Dorsolateral prefrontal cortex (tissue), 120 donors: ENCODE measurements at regions of chr9 and their contacts with region 1.

Region 1: DNA sequence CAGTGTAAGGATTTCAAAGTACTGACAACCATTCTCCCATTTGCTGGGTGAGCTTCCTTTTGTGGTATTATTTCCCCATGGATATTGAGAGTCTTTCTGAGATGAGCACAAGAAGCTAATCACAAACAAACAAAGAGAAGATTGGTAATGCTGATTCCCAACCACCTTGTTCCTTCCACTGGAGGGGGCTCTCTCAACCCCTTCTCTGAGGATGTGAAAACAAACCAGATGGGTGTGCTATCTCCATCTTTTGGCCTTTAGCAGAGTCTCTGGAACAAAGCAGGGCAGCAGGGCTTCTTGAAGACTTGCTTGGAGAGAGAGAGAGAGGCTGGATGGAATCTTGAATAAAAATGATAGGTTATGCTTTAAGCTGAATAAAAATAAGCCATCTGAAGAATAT is 576.7 kb upstream of the ZNF462 start:
- DNase-seq: peak in 2 of 10 donors; percentile 37 to 50
- H3K4me3 ChIP-seq: peak overlapping the region in 27 of 59 donors; percentile 31 to 65 (median 53)
- H3K27ac ChIP-seq: peak overlapping the region in 51 of 59 donors; percentile 4 to 88 (median 78)
- H3K27me3 ChIP-seq: no peaks in the 10 kb centered on the region
- CTCF ChIP-seq: peak in 53 of 56 donors; percentile 13 to 70 (median 48)

Region 2: DNA sequence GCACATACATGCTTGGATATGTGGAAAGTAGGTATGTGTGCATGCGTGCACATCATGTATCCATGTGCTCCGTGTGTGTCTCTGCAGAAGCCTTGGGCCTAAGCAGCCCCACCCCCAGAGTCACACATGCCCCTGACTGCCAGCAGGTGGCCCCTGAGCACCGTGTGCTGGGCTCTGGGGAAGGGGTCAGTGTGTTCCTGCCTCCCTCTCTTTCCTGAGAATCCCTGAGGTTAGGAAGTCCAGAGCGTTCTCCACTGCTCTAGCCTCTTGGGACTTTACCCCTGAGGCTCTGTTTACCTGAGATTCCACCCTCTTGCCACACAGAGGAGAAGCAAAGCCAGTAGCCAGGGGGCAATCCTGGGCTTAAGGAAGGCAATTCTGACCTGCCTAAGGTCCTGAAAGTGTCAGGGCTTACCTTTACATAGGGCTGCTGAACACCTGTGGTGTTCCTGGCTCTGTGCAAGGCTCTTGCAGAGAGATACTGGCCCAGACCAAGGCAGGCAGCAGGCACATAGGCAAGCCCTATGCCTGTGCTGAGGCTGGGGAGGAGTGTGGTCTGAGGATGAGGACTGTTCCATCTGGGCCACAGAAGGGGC is 384.6 kb before region 1 on chr9:
- intact Hi-C with region 1: loop called in 1 of 2 experiments (anchors 10 kb)
- DNase-seq: peak in 6 of 10 donors; percentile 31 to 71 (median 48)
- H3K4me3 ChIP-seq: no peak overlapping the region
- H3K27ac ChIP-seq: peak overlapping the region in 1 of 59 donors; percentile 18
- H3K27me3 ChIP-seq: no peaks in the 10 kb centered on the region
- CTCF ChIP-seq: peak; percentile 25 to 91 (median 76)

Region 3: GRCh38 chr9:105957830-105958229 is 328.4 kb before region 1 on chr9:
- intact Hi-C with region 1: loop called (anchors 5 to 10 kb)
- DNase-seq: no peak
- H3K4me3 ChIP-seq: no peak overlapping the region
- H3K27ac ChIP-seq: no peak overlapping the region
- H3K27me3 ChIP-seq: no peaks in the 10 kb centered on the region
- CTCF ChIP-seq: no peak

Region 4: GRCh38 chr9:105967798-105968197 is 318.5 kb before region 1 on chr9:
- intact Hi-C with region 1: loop called in 1 of 2 experiments (anchors 10 kb)
- DNase-seq: no peak
- H3K4me3 ChIP-seq: no peak overlapping the region
- H3K27ac ChIP-seq: peak overlapping the region in 58 of 59 donors; percentile 5 to 89 (median 78)
- H3K27me3 ChIP-seq: no peaks in the 10 kb centered on the region
- CTCF ChIP-seq: no peak

Region 5: DNA sequence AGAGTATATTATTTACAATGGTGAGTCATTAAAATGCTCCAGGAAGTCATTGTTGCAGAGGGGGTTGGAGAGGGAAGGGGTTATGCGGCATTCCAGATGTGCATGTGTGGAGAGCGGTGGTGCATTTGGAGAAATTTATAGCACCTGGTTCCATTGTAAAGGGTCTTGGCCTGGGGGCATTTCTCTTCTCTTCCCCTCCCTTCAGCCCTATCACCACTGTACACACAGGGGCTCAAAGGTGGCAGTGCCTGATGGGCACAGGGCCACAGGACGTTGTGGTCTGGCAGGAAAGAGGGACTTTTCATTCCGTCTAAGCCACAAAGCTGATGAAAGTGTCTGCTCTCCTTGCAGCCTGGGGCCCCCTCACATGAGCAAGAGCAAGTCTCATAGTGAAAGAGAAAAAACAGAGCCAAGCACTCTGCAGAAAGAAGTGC is 134.3 kb after region 1 on chr9:
- intact Hi-C with region 1: no loop called
- DNase-seq: no peak
- H3K4me3 ChIP-seq: no peak overlapping the region
- H3K27ac ChIP-seq: no peak overlapping the region
- H3K27me3 ChIP-seq: peaks cover 0 to 3% (median 0%) of the 10 kb centered on the region in 45 donors
- CTCF ChIP-seq: no peak

Region 6: GRCh38 chr9:106503759-106504158 is 217.5 kb after region 1 on chr9:
- intact Hi-C with region 1: no loop called
- DNase-seq: no peak
- H3K4me3 ChIP-seq: no peak overlapping the region
- H3K27ac ChIP-seq: no peak overlapping the region
- H3K27me3 ChIP-seq: no peaks in the 10 kb centered on the region
- CTCF ChIP-seq: no peak